Endothelial cell of umbilical vein (primary cell): ENCODE measurements at regions of chr5 and their contacts with region 1.

Region 1: DNA sequence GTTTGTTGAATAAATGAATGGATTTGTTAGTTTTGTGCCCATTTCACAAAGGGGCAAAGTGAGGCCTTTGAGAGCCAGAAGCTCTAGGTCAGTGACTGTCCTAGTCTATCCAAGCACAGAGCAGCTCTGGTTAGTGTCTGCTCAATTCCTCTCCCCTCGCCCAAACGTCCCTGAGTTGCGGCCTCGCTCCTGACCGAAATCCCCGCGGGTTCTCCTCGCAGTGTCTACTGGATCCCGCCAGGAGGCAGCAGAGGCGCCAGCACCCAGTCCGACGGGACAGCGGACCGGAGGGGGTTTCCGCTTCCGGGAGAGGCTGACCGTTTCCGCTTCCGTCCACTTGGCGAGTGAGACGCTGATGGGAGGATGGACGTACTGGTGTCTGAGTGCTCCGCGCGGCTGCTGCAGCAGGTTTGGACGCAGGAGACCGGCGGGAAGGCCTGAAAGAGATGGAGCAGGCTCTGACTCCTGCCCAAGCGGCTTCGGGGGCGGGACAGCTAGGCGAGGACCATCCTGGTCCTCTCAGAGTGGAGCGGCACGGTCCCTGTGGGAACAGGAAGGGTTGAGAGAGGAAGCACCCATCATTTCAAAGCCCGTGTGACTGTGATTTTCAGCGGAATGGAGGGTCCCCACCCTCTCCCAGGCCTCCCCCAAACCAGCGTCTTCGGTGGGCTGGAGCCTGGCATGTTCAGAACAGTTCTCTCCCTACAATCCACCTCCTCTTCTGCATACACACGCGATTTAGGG is at the start of gene RARS1:
- DNase-seq: peak; percentile 94
- H3K4me3 ChIP-seq: peak within 1 kb of the TSS; percentile 62 to 98 (median 82)
- H3K27ac ChIP-seq: peak within 1 kb of the TSS; percentile 4
- H3K4me1 ChIP-seq: peaks cover 6% of the 10 kb centered on the region
- H3K27me3 ChIP-seq: no peaks in the 10 kb centered on the region
- CTCF ChIP-seq: peak; percentile 97 to 98
- POLR2A ChIP-seq: peak; percentile 94
- total RNA-seq, gene RARS1: 90.4 and 104 TPM in 2 replicates

Region 2: GRCh38 chr5:168268949-168269943 is 217.1 kb before region 1 on chr5:
- CTCF ChIA-PET with region 1: interaction called, 3 read pairs
- POLR2A ChIA-PET with region 1: no interaction called
- dilution Hi-C with region 1: no loop called
- intact Hi-C with region 1: loop called (anchors 1 kb)
- DNase-seq: peak; percentile 87
- H3K4me3 ChIP-seq: peak overlapping the region in 1 of 3 experiments; percentile 3
- H3K27ac ChIP-seq: no peak overlapping the region
- H3K4me1 ChIP-seq: no peaks in the 10 kb centered on the region
- H3K27me3 ChIP-seq: no peaks in the 10 kb centered on the region
- CTCF ChIP-seq: peak; percentile 87 to 88
- POLR2A ChIP-seq: no peak

Region 3: GRCh38 chr5:168557389-168557788 is 71.1 kb after region 1 on chr5:
- CTCF ChIA-PET with region 1: no interaction called
- POLR2A ChIA-PET with region 1: no interaction called
- dilution Hi-C with region 1: no loop called
- intact Hi-C with region 1: loop called (anchors 5 kb)
- DNase-seq: no peak
- H3K4me3 ChIP-seq: no peak overlapping the region
- H3K27ac ChIP-seq: no peak overlapping the region
- H3K4me1 ChIP-seq: no peaks in the 10 kb centered on the region
- H3K27me3 ChIP-seq: no peaks in the 10 kb centered on the region
- CTCF ChIP-seq: no peak
- POLR2A ChIP-seq: no peak

Region 4: DNA sequence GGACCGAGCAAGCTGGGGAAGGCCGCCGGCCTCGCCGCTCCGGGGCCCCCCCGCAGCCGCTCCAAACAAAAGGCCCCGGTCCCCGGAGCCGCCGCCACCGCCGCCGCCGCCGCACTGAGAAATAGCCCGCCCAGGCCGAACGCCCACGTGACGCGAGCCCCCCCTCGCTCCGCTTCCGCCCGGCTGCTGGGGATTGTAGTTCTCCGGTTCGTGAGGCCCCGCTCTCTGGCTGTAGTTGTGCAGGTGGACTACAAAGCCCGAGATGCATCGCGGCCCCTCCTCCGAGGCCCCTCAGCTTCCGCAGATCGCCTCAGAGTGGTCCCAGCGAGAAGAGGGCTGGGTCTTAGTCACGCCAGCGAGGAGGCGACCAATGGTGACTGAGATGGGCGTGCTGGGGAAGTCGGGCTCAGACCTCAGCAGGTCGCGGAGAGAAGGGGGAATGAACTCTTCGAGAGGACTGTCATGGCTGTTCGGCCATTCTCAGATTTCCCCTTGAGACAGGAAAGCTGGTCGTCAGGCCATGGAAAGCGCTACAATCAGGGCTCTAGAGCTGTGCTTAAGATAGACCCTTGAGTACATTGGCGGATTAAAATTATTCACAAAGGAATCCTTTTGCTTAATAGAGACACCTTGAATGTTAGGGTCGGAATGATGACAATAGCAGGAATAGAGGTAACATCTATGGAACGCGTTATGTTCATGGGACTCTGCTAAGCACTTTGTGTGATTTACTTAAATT is 93.3 kb after region 1 on chr5:
- CTCF ChIA-PET with region 1: no interaction called
- POLR2A ChIA-PET with region 1: interaction called, 4 read pairs
- dilution Hi-C with region 1: no loop called
- intact Hi-C with region 1: loop called (anchors 1 kb)
- DNase-seq: peak; percentile 99
- H3K4me3 ChIP-seq: peak overlapping the region in 2 of 3 experiments; percentile 80 to 100
- H3K27ac ChIP-seq: peak overlapping the region; percentile 92
- H3K4me1 ChIP-seq: peaks cover 24% of the 10 kb centered on the region
- H3K27me3 ChIP-seq: no peaks in the 10 kb centered on the region
- CTCF ChIP-seq: no peak
- POLR2A ChIP-seq: peak; percentile 92

Region 5: DNA sequence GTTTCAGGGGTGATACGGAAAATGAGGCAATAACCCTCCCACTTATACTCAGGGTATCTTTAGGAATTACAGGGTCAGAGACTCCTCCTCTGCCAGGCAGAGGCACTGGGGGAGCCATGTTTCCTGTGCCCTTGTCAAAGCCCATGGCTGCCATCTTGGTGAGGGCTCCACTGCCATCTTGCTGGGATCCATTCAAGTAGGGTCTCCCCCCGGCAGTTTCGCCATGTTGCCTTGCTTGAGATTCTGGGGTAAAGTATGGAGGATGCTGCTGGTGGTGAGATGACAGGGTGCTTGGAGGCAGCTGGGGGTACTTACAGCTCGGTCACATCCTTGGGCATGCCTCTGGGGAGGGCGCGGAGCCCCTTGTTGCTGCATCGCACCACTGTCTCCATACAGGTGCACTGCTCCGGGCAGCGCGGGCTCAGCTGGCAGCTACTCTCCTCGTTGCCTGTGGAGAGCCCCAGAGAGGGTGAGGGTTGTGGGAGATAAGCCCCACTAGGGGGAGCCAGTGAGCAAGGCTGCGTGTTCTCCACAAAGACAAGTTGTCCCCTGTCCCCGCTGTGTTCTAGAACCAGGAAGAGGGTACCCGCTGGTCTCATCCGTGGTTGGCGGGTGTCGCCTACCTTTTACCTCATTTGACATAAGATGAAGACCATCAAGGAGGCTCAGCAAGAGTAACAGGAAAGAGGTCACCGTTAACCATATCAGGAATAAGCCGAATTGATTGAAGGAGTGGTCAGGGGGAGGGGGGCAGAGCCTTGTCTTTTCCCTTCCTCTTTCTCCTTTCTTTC is 261.9 kb after region 1 on chr5:
- CTCF ChIA-PET with region 1: no interaction called
- POLR2A ChIA-PET with region 1: no interaction called
- dilution Hi-C with region 1: no loop called
- intact Hi-C with region 1: no loop called
- DNase-seq: no peak
- H3K4me3 ChIP-seq: no peak overlapping the region
- H3K27ac ChIP-seq: no peak overlapping the region
- H3K4me1 ChIP-seq: no peaks in the 10 kb centered on the region
- H3K27me3 ChIP-seq: no peaks in the 10 kb centered on the region
- CTCF ChIP-seq: peak; percentile 34 to 48
- POLR2A ChIP-seq: no peak